Tibial artery (tissue), 4 donors: ENCODE measurements at regions of chr12 and their contacts with region 1.

Region 1: GRCh38 chr12:29710104-29710503 is 73.6 kb downstream of the TMTC1 start:
- DNase-seq: peak in 1 of 2 donors; percentile 39
- H3K4me3 ChIP-seq: no peak overlapping the region
- H3K27ac ChIP-seq: peak overlapping the region; percentile 41 to 61
- H3K4me1 ChIP-seq: peaks cover 0 to 92% (median 37%) of the 10 kb centered on the region in 4 donors
- H3K27me3 ChIP-seq: no peaks in the 10 kb centered on the region
- CTCF ChIP-seq: no peak

Region 2: DNA sequence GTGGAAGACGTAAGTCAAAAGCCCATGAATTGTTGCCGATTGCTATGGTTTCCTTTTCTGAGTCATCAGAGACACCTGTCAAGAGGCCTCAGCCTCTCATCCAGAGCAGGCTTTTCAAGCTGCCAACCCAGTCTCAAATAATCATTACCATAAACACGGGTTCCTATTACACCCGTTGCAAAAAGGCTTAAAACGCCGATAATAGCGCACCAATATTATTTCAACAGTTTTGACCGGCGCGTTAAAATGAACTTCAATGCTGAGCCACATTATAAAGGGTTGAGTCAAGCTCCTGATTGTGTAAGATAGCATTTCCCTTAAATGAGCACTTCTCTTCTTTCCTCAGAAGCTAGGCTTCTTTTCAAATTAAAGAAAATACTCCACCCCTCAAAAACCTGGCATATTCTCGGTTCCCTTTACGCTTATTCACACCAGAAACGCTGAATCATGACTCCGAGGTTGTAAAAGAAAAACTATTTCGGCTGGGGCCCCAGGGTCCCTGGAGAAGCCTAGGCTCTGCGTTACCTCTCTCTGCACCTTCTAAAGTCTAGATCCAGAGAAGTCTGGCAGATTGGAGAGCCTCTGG is 72.3 kb after region 1 on chr12:
- intact Hi-C with region 1: loop called (anchors 5 kb)
- DNase-seq: peak in 1 of 2 donors; percentile 67
- H3K4me3 ChIP-seq: peak overlapping the region; percentile 84 to 94
- H3K27ac ChIP-seq: peak overlapping the region; percentile 85 to 88
- H3K4me1 ChIP-seq: peaks cover 0 to 52% (median 17%) of the 10 kb centered on the region in 4 donors
- H3K27me3 ChIP-seq: no peaks in the 10 kb centered on the region
- CTCF ChIP-seq: no peak